ENCODE measurements at regions of chr1 and their contacts with region 1.

Region 1: DNA sequence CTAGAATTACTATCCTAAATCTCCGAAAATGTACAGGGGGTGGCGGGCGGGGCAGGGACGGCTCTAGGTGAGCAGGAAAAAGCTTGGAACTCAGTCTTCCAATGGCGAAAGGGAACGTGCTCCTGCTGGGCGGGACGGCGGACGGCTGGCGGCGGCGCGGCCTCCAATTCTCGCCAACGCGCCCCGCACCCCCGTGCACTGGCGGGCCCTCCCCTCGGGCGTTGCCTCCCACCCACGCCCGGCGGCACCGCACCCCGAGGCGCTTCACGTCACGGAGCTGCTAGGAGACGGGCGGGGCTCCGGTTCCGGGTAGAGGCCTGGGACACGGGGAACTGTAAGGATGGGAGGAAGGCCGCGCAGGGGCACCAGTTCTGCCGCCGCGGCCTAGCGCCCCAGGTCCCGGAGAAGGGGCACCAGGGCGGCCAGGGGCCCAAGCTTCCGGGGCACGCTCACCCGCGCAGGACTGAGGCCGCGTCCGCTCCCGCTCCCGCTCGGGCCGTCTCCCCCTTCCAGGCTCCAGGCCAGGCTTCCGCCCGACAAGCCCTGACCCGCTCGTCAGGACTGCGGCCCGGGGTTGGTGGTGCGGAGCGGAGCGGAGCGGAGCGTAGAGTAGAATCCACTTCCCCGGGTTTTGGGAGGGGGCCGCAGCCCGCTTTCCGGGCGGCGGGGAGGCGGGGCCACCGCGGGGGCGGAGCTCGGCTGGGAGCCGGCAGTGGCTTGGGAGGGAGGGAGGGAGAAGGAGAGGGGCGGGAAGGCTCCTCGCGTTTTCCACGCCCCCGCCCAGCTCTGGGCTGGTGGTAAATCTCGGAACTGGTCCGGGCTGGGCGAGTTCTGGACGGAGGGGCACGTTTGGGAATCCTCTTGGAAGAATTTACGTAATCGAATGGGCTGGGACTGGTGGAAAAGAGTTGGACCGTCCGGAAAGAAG is at the start of gene DDX59:
- DNase-seq: peak; percentile 100
- H3K4me3 Mint-ChIP-seq: peak within 1 kb of the TSS; percentile 74
- H3K27ac Mint-ChIP-seq: peak within 1 kb of the TSS; percentile 91
- H3K4me1 Mint-ChIP-seq: peaks cover 50% of the 10 kb centered on the region
- H3K27me3 Mint-ChIP-seq: no peaks in the 10 kb centered on the region
- CTCF ChIP-seq: no peak
- total RNA-seq, gene DDX59: 36.6 and 50.7 TPM in 2 replicates

Region 2: DNA sequence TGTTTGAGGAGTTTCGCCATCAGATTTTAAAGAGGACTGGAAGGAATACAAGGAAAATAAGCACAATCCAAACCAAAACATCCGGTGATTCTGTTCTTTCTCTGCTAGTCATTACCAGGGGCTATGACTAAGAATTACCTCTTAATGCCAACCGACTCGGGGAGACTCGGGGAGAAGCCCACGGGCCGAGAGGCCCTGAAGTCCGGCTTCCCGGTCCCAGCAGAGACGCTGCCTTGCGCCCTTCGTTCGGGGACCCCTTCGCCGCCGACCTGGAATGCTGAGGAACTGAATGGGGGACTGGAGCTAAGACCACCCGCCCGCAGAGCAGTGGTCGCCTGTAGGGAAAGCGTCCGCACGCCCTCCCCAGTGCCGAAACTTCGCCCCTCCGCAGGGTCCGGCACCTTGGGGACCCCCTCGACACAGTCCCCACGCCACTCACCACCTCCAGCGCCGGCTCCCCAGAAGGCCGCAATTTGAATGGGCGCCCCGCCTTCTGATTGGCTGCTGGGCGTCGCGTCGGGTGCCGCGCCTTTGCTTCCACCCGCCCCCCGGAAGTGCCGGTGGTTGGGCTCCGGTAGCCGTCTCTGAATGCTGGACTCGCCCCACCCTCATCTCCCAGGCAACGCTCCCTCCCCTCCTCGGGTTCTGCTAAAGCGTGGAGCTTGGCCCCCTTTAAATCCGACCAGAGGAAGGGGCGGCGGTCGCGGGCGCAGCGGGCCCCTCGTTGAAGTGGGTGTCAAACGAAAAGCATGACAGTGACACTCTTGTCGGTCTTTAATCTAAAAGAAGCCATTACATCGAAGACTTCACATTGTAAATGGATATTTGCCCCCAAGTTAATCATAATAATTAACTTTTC is 49.1 kb before region 1 on chr1 and contains the start of gene KIF14:
- CTCF ChIA-PET with region 1: interaction called, 41 read pairs
- POLR2A ChIA-PET with region 1: interaction called, 92 read pairs
- intact Hi-C with region 1: loop called (anchors 1 kb)
- DNase-seq: peak; percentile 99
- H3K4me3 Mint-ChIP-seq: peak within 1 kb of the TSS; percentile 96
- H3K27ac Mint-ChIP-seq: peak within 1 kb of the TSS; percentile 97
- H3K4me1 Mint-ChIP-seq: peaks cover 48% of the 10 kb centered on the region
- H3K27me3 Mint-ChIP-seq: no peaks in the 10 kb centered on the region
- CTCF ChIP-seq: no peak
- total RNA-seq, gene KIF14: 13.4 and 25.5 TPM in 2 replicates

Region 3: DNA sequence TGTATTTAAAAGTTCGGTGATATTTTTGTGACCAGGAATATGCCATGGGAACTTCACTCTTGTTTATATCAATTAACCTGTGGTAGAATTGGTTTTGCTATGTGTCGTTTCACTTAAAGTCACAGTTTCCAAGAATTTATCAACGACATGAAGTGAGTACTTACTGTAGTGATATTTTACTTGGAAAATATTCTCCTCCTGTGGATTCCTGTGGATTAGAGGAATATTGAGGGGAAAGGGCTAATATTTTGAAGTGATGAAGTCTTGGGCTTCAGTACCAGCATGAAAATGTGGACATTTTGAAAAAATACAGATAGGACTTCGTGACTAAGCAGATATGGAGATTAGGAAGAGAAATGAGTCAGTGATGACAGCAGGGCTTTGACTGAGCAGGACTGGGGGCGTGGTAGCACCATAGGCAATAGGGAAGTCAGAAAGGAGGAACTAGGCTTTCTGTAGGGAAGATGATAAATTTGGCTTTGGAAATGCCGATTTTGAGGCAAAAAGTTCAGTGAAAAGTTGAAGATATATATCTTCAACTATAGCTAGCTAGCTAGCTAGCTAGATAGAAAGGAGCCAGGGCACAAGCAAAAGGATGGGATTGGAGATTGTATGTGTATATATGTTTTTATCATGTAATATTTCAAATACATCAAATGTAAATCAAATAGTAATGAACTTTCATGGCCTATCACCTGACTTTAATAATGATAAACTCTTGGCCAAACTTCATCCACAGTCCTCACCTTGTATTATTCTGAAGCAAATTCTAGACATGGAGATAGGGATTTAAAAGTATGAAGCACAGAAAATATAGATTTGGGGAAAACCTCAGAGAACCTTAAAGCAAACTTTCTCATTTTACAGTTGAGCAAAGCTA is 29.5 kb before region 1 on chr1:
- CTCF ChIA-PET with region 1: interaction called, 8 read pairs
- POLR2A ChIA-PET with region 1: interaction called, 208 read pairs
- intact Hi-C with region 1: loop called (anchors 1 kb)
- DNase-seq: peak; percentile 95
- H3K4me3 Mint-ChIP-seq: peak overlapping the region; percentile 4
- H3K27ac Mint-ChIP-seq: peak overlapping the region; percentile 55
- H3K4me1 Mint-ChIP-seq: peaks cover 20% of the 10 kb centered on the region
- H3K27me3 Mint-ChIP-seq: no peaks in the 10 kb centered on the region
- CTCF ChIP-seq: no peak

Region 4: GRCh38 chr1:200731654-200732332 is 62.2 kb after region 1 on chr1:
- CTCF ChIA-PET with region 1: no interaction called
- POLR2A ChIA-PET with region 1: interaction called, 230 read pairs
- intact Hi-C with region 1: no loop called
- DNase-seq: no peak
- H3K4me3 Mint-ChIP-seq: no peak overlapping the region
- H3K27ac Mint-ChIP-seq: no peak overlapping the region
- H3K4me1 Mint-ChIP-seq: no peaks in the 10 kb centered on the region
- H3K27me3 Mint-ChIP-seq: no peaks in the 10 kb centered on the region
- CTCF ChIP-seq: no peak

Region 5: GRCh38 chr1:200774735-200775444 is 105.3 kb after region 1 on chr1:
- CTCF ChIA-PET with region 1: interaction called, 3 read pairs
- POLR2A ChIA-PET with region 1: interaction called, 26 read pairs
- intact Hi-C with region 1: no loop called
- DNase-seq: no peak
- H3K4me3 Mint-ChIP-seq: no peak overlapping the region
- H3K27ac Mint-ChIP-seq: peak overlapping the region; percentile 16
- H3K4me1 Mint-ChIP-seq: peaks cover 49% of the 10 kb centered on the region
- H3K27me3 Mint-ChIP-seq: no peaks in the 10 kb centered on the region
- CTCF ChIP-seq: no peak

Region 6: DNA sequence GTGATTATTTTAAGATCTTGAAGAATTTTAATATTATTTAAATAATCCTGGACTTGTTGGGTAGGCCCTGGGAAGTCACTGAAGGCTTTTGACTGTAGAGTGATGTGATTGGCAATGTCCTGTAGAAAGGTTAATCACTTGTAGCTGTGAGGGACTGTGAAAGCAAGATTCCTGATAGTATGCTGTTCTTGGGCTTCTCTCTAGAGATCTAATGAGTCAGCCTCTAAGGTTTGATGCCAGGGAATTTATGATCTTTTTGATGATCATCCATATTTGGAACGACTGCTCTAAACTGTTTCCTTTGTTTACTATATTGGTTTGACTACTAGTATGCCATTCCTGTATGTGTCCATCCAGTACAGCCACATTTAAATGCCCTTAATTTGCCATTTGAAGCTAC is 125.6 kb after region 1 on chr1:
- CTCF ChIA-PET with region 1: interaction called, 3 read pairs
- POLR2A ChIA-PET with region 1: interaction called, 58 read pairs
- intact Hi-C with region 1: no loop called
- DNase-seq: peak; percentile 42
- H3K4me3 Mint-ChIP-seq: no peak overlapping the region
- H3K27ac Mint-ChIP-seq: peak overlapping the region; percentile 1
- H3K4me1 Mint-ChIP-seq: peaks cover 36% of the 10 kb centered on the region
- H3K27me3 Mint-ChIP-seq: no peaks in the 10 kb centered on the region
- CTCF ChIP-seq: no peak

Region 7: DNA sequence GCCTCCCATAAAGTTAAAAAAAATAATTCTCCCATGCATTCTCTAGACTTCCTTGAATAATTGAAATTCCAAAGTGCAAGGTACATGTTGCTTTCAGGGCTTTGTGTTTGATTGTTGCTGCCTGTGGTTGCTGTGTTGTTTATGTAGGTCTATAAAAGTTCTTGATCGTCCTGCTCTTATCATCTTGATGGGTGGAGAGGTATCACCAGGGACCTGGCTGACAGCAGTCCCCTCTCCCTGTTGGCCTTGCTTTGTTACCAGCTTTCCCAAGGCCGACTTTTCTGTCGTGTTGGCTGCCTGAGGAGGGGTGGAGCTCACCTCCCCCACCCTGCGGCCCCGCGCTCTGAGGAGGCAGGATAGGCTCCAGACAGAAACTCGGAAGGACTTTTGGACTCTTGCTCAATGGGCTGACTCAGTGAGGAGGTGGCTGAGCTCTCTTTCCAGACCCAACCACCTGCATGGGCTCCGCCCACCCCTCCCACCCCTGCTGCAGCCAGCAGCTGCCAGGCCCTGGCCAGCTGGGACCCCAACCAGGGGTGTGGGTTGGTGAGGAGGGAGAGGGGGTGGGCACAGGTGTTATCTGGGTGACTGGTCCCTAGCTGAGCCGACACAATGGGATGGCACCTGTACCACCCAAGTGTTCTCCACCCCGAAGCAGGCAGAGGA is 227.1 kb after region 1 on chr1:
- CTCF ChIA-PET with region 1: interaction called, 4 read pairs
- POLR2A ChIA-PET with region 1: interaction called, 28 read pairs
- intact Hi-C with region 1: no loop called
- DNase-seq: peak; percentile 99
- H3K4me3 Mint-ChIP-seq: peak overlapping the region; percentile 92
- H3K27ac Mint-ChIP-seq: peak overlapping the region; percentile 89
- H3K4me1 Mint-ChIP-seq: peaks cover 62% of the 10 kb centered on the region
- H3K27me3 Mint-ChIP-seq: no peaks in the 10 kb centered on the region
- CTCF ChIP-seq: no peak

Measured in MCF 10A (cell line).